OCI-LY7 (cell line): ENCODE measurements at regions of chr9 and their contacts with region 1.

Region 1: GRCh38 chr9:121121582-121122087 is 46.9 kb downstream of the CNTRL start:
- DNase-seq: peak; percentile 89
- H3K4me3 ChIP-seq: peak overlapping the region; percentile 54
- H3K27ac ChIP-seq: peak overlapping the region; percentile 66
- H3K4me1 ChIP-seq: peaks cover 22% of the 10 kb centered on the region
- CTCF ChIP-seq: peak; percentile 25; the same call in 1 of the 2 replicates

Region 2: GRCh38 chr9:121107041-121107440 is 14.6 kb before region 1 on chr9:
- CTCF ChIA-PET with region 1: no interaction called
- POLR2A ChIA-PET with region 1: interaction called, 12 read pairs
- intact Hi-C with region 1: no loop called
- DNase-seq: peak; percentile 26
- H3K4me3 ChIP-seq: no peak overlapping the region
- H3K27ac ChIP-seq: no peak overlapping the region
- H3K4me1 ChIP-seq: peaks cover 3% of the 10 kb centered on the region
- CTCF ChIP-seq: 0 out of 2 replicates have a peak, but pooled peaks have one; percentile 41